ENCODE measurements at regions of chr3 and their contacts with region 1.

Region 1: GRCh38 chr3:152444029-152444641 is 175.4 kb downstream of the MBNL1 start:
- DNase-seq: no peak
- ATAC-seq: peak; percentile 53 to 55
- H3K4me3 ChIP-seq: no peak overlapping the region
- H3K27ac ChIP-seq: no peak overlapping the region
- H3K4me1 ChIP-seq: no peaks in the 10 kb centered on the region
- H3K27me3 ChIP-seq: no peaks in the 10 kb centered on the region

Region 2: GRCh38 chr3:152071924-152072323 is 372.2 kb before region 1 on chr3:
- intact Hi-C with region 1: loop called in 2 of 4 experiments (anchors 10 kb)
- DNase-seq: no peak
- ATAC-seq: peak; percentile 54 to 65
- H3K4me3 ChIP-seq: no peak overlapping the region
- H3K27ac ChIP-seq: no peak overlapping the region
- H3K4me1 ChIP-seq: no peaks in the 10 kb centered on the region
- H3K27me3 ChIP-seq: no peaks in the 10 kb centered on the region

Region 3: DNA sequence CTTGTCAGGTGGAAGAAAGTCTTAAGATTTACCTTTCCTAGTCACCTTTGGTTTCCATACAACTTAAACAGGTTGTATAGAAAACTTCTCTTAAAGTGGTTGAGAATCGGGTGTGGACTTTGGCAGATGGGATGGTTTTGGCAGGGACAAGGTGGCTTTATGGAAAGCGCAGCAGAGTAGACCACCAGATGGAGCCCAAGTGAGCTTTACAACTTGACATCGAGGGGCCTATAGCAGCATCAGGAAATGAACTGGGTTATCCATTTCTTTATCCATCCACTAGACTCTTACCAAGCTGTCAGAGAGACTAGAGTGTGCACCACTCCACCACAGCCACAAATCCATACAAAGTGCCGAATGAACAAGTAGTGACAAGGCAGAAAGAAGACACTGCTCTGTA is 260.7 kb before region 1 on chr3:
- intact Hi-C with region 1: loop called in 1 of 4 experiments (anchors 5 kb)
- DNase-seq: peak in 2 of 3 donors; percentile 32 to 62
- ATAC-seq: peak; percentile 80 to 82
- H3K4me3 ChIP-seq: no peak overlapping the region
- H3K27ac ChIP-seq: no peak overlapping the region
- H3K4me1 ChIP-seq: no peaks in the 10 kb centered on the region
- H3K27me3 ChIP-seq: no peaks in the 10 kb centered on the region

Region 4: GRCh38 chr3:152268555-152269425 is 175.3 kb before region 1 on chr3 and contains the start of gene MBNL1:
- intact Hi-C with region 1: loop called in 3 of 4 experiments (anchors 10 kb)
- DNase-seq: peak; percentile 82 to 92 (median 91)
- ATAC-seq: peak; percentile 84 to 88
- H3K4me3 ChIP-seq: peak within 1 kb of the TSS; percentile 70
- H3K27ac ChIP-seq: peak within 1 kb of the TSS; percentile 88
- H3K4me1 ChIP-seq: peaks cover 7% of the 10 kb centered on the region
- H3K27me3 ChIP-seq: no peaks in the 10 kb centered on the region
- total RNA-seq, gene MBNL1: 142 to 160 (median 154) TPM

Region 5: DNA sequence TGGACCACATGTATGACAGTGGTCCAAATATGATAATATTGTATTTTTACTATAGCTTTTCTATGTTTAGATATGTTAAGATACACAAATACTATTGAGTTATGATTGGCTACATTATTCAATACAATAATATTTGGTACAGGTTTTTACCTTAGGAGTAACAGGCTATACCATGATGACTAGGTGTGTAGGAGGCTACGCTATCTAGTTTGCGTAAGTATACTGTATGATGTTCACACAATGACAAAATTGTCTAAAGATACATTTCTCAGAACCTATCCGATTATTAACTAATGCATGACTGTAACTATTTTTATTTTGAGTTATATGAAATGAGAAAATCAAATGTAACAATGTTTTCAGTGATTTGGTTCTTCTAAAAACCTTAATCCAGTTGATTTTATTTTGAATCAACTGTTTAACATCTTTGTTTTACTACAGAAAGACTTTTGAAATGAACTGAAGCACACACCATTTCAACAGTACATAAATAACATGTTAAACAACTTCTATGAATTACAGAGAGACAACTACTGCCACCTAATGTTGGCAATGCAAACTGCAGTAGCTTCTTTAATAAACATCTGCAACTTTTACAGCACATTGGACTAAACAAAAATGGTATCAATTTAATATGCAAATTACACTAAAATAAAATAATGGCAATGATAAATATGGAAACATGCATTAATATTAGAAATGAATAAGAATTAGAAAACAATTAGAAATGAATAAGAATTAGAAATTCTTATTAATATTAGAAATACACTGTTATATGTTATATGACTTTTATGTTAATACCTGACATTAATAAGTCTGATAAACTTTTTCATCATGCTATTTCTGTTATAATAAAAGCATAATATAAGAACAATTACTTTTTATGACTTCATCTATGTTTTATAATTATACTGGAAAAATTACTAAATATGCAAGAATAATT is 80.3 kb after region 1 on chr3:
- intact Hi-C with region 1: no loop called
- DNase-seq: no peak
- ATAC-seq: no peak
- H3K4me3 ChIP-seq: no peak overlapping the region
- H3K27ac ChIP-seq: no peak overlapping the region
- H3K4me1 ChIP-seq: no peaks in the 10 kb centered on the region
- H3K27me3 ChIP-seq: no peaks in the 10 kb centered on the region

Region 6: GRCh38 chr3:153658136-153658535 is 1214.0 kb after region 1 on chr3:
- intact Hi-C with region 1: no loop called
- DNase-seq: no peak
- ATAC-seq: peak; percentile 59 to 71
- H3K4me3 ChIP-seq: no peak overlapping the region
- H3K27ac ChIP-seq: no peak overlapping the region
- H3K4me1 ChIP-seq: no peaks in the 10 kb centered on the region
- H3K27me3 ChIP-seq: no peaks in the 10 kb centered on the region

Measured in right cardiac atrium (tissue), 5 donors.